AG04450 (cell line): ENCODE measurements at regions of chr4 and their contacts with region 1.

Region 1: DNA sequence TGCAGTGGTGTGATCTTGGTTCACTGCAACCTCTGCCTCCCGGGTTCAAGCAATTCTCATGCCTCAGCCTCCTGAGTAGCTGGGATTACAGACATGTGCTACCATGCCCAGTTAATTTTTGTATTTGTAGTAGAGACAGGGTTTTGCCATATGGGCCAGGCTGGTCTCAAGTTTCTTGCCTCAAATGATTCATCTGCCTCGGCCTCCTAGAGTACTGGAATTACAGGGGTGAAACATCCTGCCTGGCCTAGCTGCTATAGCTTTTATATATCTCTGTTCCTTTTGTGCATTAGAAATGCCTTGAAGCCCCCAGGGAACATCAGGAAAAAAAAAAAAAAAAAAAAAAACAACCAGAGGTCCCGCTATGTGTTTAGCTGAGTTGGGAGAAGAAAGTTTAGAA is 34.8 kb downstream of the UBE2K start:
- DNase-seq: peak; percentile 66
- H3K4me3 ChIP-seq: no peak overlapping the region
- H3K27ac ChIP-seq: no peak overlapping the region
- H3K27me3 ChIP-seq: no peaks in the 10 kb centered on the region
- CTCF ChIP-seq: no peak

Region 2: GRCh38 chr4:39410415-39410814 is 322.3 kb before region 1 on chr4:
- CTCF ChIA-PET with region 1: no interaction called
- POLR2A ChIA-PET with region 1: no interaction called
- DNase-seq: no peak
- H3K4me3 ChIP-seq: no peak overlapping the region
- H3K27ac ChIP-seq: no peak overlapping the region
- H3K27me3 ChIP-seq: peaks cover 4% of the 10 kb centered on the region
- CTCF ChIP-seq: peak; percentile 40

Region 3: GRCh38 chr4:39687014-39687413 is 45.7 kb before region 1 on chr4:
- CTCF ChIA-PET with region 1: no interaction called
- POLR2A ChIA-PET with region 1: no interaction called
- DNase-seq: no peak
- H3K4me3 ChIP-seq: no peak overlapping the region
- H3K27ac ChIP-seq: no peak overlapping the region
- H3K27me3 ChIP-seq: no peaks in the 10 kb centered on the region
- CTCF ChIP-seq: no peak

Region 4: GRCh38 chr4:39706334-39706733 is 26.4 kb before region 1 on chr4:
- CTCF ChIA-PET with region 1: interaction called, 3 read pairs
- POLR2A ChIA-PET with region 1: interaction called, 10 read pairs
- DNase-seq: peak; percentile 60
- H3K4me3 ChIP-seq: no peak overlapping the region
- H3K27ac ChIP-seq: peak overlapping the region; percentile 68
- H3K27me3 ChIP-seq: no peaks in the 10 kb centered on the region
- CTCF ChIP-seq: no peak

Region 5: GRCh38 chr4:39808231-39808749 is 75.6 kb after region 1 on chr4:
- CTCF ChIA-PET with region 1: no interaction called
- POLR2A ChIA-PET with region 1: interaction called, 11 read pairs
- DNase-seq: no peak
- H3K4me3 ChIP-seq: no peak overlapping the region
- H3K27ac ChIP-seq: no peak overlapping the region
- H3K27me3 ChIP-seq: no peaks in the 10 kb centered on the region
- CTCF ChIP-seq: no peak